ENCODE measurements at regions of chr3 and their contacts with region 1.

Region 1: DNA sequence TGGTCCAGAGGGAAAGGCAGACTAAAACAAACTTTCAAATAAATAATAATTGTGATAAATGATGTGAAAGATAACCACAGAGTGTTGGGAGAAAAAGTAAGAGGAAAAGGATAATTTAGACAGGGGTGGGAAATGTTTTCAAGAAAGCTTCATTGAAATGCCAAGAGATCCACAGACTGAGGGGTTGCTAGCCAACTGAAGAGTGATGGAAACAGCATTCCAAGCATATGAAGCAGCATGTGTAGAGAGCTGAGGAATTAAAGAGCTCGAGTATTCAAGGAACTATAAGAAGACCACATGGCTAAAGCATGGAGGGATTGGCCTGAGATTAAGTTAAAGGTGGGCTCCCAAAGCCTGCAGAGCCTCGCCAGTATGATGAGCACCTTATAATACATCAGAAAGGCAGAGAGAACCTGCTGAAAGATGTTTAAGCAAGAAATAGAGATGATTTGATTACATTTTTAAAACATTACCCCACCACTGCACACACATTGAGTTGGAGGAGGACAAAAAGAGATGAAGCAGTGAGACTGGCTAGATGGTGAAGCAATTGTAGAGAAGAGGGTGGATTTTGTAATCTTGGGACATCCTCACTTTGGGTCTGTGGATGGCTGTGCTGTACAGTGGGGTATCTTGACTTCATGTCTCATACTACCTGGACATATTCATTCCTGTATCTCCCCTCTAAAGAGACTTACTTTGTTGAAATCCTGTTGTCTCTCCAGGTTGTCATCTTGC is 100.8 kb downstream of the STAC start:
- DNase-seq: peak; percentile 23
- H3K4me3 ChIP-seq: no peak overlapping the region
- CTCF ChIP-seq: no peak

Region 2: GRCh38 chr3:36519682-36520081 is 38.6 kb after region 1 on chr3:
- in situ Hi-C with region 1: loop called (anchors 5 kb)
- DNase-seq: no peak
- H3K4me3 ChIP-seq: no peak overlapping the region
- CTCF ChIP-seq: no peak

Region 3: DNA sequence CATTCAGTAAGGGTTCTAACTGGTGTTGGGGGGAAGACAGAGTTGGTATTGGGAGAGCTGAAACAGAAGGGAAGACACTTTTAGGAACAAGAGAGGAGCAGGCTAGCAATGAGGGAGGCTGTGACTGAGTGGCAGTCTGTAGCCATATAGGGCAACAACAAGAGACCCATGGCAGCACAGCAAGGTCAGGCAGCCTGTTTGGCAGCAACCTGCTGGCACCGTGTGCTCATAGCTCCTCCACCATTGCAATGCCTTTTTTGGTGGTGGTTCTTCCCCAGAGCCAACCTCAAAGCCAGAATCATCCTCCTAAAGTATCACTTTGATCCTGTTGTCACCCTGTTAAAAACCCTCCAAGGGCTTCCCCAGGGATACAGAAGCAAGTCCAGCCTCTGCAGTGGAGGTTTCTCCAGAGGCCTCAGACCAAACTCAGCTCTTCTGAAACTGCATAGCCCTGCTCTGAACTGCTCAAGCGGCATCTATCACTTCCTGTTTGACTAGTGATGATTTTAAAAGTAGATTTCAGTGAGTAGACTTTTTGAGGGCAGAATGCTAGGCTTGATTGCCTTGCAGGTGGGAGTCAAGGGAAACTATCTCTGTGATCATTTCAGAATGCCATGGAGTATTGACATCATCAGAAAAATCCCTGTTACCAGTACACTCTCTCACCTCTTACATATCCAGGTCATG is 76.1 kb after region 1 on chr3:
- in situ Hi-C with region 1: loop called (anchors 10 kb)
- DNase-seq: no peak
- H3K4me3 ChIP-seq: no peak overlapping the region
- CTCF ChIP-seq: no peak